Vagina (tissue), 2 donors: ENCODE measurements at regions of chr3 and their contacts with region 1.

Region 1: DNA sequence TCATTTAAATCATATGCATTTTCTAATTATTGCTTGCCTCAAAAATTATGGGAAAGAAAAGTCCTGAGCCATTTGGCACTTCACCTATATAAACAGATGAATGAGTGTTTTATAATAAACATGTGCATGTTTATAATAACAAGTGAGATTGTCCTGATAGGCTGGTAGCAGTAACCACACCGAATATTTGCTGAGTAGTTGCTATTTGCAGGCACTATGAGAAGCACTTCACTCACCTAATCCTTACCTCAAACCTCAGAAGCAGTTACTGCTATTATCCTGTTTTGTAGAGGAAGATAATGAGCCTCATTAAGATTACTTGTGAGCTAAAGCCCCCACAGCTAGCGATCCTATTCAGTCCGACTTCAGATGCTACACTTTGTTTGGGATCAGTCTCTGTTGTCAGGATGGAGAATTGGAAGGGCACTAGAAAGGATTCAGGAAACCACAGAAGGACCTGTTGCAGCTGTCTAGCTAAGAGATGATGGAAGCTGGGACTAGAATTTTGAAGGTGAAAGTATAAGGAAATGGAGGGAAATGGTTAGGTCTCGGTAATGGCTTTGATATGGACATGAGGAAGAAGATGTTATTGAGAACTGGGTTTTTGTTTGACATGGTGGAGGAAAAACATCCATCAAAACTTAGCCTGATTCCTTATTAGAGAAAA is 28.4 kb upstream of the MAGI1 start:
- DNase-seq: no peak
- H3K4me3 ChIP-seq: no peak overlapping the region
- H3K27ac ChIP-seq: no peak overlapping the region
- H3K4me1 ChIP-seq: no peaks in the 10 kb centered on the region
- H3K27me3 ChIP-seq: no peaks in the 10 kb centered on the region
- CTCF ChIP-seq: no peak
- POLR2A ChIP-seq: no peak

Region 2: GRCh38 chr3:67804089-67804488 is 1737.0 kb after region 1 on chr3:
- intact Hi-C with region 1: loop called (anchors 10 kb)
- DNase-seq: no peak
- H3K4me3 ChIP-seq: no peak overlapping the region
- H3K27ac ChIP-seq: no peak overlapping the region
- H3K4me1 ChIP-seq: no peaks in the 10 kb centered on the region
- H3K27me3 ChIP-seq: no peaks in the 10 kb centered on the region
- CTCF ChIP-seq: no peak
- POLR2A ChIP-seq: no peak